Endothelial cell of umbilical vein (primary cell): ENCODE measurements at regions of chr1 and their contacts with region 1.

Region 1: DNA sequence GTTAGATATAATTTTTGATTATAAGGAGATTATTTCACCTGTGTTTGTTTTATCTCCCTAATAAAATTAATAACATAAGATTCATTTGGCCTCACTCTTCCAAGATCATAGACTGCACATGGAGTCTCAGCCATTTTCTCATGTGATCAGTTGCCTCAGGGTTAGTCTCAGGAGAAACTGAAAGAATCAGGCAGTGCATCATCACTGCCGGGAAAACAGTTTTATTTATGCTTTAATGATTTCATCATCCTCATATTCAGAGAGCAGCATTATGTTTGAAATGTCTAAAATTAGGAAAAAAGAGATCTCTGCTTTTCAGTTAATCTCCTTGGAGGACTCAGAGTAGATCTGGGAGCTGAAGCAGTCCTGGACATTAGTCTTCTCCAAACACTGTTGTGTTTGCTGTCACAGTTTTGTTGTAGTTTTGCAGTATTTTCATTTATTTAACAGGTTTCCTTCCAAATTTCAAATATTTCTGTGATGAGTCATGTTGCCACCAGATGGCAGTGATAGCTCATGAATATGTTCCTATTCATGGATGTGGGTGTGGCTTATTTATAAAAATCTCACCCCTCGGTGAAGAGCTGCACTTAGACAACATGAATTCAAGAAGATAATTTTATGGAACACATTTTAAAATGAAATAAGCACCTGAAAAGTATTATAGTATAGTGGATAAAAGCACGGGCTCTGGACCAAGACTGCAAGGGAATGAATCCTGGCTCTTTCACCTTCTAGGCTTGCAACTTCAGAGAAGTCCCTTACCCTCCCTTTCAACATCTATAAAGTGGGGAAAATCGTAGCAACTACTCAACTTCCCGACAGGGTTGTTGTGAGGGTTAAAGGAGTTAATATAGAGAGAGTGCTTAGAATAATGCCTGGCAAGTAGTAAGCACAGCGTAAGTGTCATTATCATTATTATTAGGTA is 31.2 kb downstream of the CHD1L start:
- DNase-seq: peak; percentile 77
- H3K4me3 ChIP-seq: no peak overlapping the region
- H3K27ac ChIP-seq: peak overlapping the region; percentile 48
- H3K4me1 ChIP-seq: peaks cover 14% of the 10 kb centered on the region
- H3K27me3 ChIP-seq: no peaks in the 10 kb centered on the region
- CTCF ChIP-seq: peak; percentile 28 to 35
- POLR2A ChIP-seq: no peak

Region 2: GRCh38 chr1:147260956-147261355 is 12.7 kb before region 1 on chr1:
- CTCF ChIA-PET with region 1: interaction called, 12 read pairs
- POLR2A ChIA-PET with region 1: no interaction called
- dilution Hi-C with region 1: no loop called
- intact Hi-C with region 1: no loop called
- DNase-seq: no peak
- H3K4me3 ChIP-seq: no peak overlapping the region
- H3K27ac ChIP-seq: no peak overlapping the region
- H3K4me1 ChIP-seq: no peaks in the 10 kb centered on the region
- H3K27me3 ChIP-seq: no peaks in the 10 kb centered on the region
- CTCF ChIP-seq: no peak
- POLR2A ChIP-seq: no peak